Dorsolateral prefrontal cortex (tissue), 120 donors: ENCODE measurements at regions of chr1 and their contacts with region 1.

Region 1: DNA sequence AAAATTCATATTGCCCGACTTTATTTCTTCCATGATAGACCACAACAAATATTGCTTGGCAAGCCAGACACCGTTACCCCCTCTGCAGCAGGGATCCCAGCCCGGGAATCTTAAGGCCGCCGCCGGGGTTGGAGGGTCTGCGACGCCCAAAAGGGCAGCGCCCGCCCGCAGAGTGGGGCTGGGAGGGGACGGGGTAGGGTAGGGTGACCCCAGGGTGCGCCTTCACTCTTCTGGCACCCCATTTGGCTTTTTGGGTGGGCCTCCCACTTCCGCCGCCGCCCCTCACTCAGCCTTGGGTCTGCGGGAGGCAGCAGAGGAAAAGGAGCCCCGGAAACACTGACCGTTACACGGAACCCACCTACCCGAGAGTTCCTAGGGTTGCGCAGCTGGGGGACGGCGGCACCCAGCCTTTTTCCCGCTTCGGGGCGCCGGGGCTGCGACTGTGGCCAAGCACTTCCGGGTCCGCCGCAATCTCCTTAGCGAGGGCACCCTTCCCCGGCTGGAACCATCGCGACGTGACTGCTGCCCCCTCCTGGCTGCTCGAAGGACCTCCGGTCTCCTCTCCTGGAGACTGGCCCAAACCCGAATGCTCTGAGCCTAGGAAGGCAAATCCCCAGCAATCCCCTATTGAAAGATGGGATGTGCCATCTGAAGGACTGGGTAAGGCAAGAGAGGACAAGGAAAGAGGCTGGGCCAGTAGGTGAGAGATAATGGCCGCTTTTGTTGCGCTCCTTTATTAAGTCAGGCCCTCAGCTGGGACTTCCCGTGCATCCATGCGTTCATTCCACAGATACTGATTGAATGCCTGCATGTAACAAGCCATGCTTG is at the start of gene PIGC:
- DNase-seq: peak; percentile 84 to 93 (median 90)
- H3K4me3 ChIP-seq: peak within 1 kb of the TSS; percentile 67 to 99 (median 92)
- H3K27ac ChIP-seq: peak within 1 kb of the TSS in 52 of 59 donors; percentile 18 to 91 (median 67)
- H3K27me3 ChIP-seq: no peaks in the 10 kb centered on the region
- CTCF ChIP-seq: peak; percentile 74 to 96 (median 90)
- total RNA-seq, gene PIGC: 10.6 to 22.8 (median 16.0) TPM

Region 2: GRCh38 chr1:172002725-172003345 is 441.0 kb before region 1 on chr1:
- intact Hi-C with region 1: loop called in 1 of 2 experiments (anchors 5 kb)
- DNase-seq: peak in 1 of 10 donors; percentile 28
- H3K4me3 ChIP-seq: no peak overlapping the region
- H3K27ac ChIP-seq: peak overlapping the region in 25 of 59 donors; percentile 5 to 68 (median 28)
- H3K27me3 ChIP-seq: no peaks in the 10 kb centered on the region
- CTCF ChIP-seq: peak; percentile 42 to 90 (median 73)

Region 3: DNA sequence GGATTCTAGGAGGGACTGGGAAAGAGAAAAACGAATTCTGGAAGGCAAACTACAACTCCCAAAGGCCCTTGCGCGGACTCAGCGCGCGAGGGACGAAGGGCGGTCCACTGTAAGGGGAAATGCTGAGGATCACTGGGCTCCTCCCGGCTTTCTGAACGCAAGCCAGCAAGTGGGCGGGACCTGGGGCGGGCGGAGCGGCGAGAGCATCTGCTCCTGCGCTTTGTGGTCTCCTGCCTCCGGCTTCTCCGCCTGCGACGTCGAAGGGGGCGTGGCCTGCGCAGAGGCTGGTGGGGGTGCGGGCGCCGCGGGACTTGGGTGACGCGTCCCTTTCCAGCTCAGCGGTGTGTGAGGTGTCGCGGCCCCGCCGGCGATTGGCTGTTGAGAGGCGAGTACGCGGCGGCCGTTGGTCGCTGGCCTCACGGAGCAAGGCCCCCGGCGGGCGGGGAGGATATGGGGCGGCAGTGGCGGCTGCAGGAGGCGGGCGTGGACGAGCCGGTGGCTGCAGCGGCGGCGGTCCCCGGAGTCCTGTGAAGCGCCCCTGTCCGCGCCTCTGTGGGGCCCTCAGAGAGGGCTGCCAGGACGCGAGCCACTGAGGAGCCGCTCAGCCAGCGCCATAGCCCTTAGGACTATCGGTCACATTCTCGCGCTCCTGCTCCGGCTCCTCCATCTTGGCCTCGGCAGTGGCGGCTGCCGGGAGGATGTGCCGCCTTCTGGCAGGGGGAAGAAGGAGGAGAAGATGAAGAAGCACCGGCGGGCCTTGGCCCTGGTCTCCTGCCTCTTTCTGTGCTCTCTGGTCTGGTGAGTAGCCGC is 89.1 kb after region 1 on chr1 and contains the start of gene SUCO:
- intact Hi-C with region 1: loop called (anchors 5 kb)
- DNase-seq: peak; percentile 99 to 100 (median 99)
- H3K4me3 ChIP-seq: peak within 1 kb of the TSS; percentile 67 to 99 (median 93)
- H3K27ac ChIP-seq: peak within 1 kb of the TSS; percentile 93 to 100 (median 98)
- H3K27me3 ChIP-seq: no peaks in the 10 kb centered on the region
- CTCF ChIP-seq: peak in 32 of 56 donors; percentile 0 to 52 (median 22)
- total RNA-seq, gene SUCO: 24.2 to 46.6 (median 34.6) TPM